SK-N-SH (cell line): ENCODE measurements at regions of chr1 and their contacts with region 1.

Region 1: DNA sequence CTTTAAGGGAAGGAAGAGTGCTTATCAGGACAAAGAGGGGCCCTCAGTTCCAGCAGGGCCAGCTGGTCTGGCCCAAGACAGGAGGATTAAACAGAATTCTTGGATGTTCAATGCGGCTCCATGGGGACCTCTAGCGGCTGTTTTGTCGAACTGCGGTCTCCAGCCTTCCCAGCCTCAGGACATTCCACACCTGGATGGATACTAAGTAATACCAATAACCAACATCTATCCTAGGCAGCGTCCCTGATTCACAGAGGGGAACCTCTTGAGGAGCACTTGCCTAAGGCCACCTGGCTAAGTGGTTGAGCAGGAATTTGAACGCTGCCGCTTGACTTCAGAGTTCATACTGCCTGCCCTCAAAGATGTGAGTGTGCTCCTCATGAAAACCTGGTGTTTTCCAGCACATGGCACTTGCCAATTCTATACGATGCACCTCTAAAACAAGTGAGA is 15.5 kb upstream of the CD247 start:
- DNase-seq: peak; percentile 81
- H3K4me3 ChIP-seq: no peak overlapping the region; a peak in 1 of 4 replicates
- H3K27ac ChIP-seq: no peak overlapping the region
- H3K4me1 ChIP-seq: peaks cover 0 to 3% of the 10 kb centered on the region in 2 experiments; a peak in 1 of 4 replicates
- H3K27me3 ChIP-seq: no peaks in the 10 kb centered on the region; the same call in 1 of the 2 replicates
- CTCF ChIP-seq: peak; percentile 91
- EP300 ChIP-seq: no peak
- RAD21 ChIP-seq: peak; percentile 91

Region 2: DNA sequence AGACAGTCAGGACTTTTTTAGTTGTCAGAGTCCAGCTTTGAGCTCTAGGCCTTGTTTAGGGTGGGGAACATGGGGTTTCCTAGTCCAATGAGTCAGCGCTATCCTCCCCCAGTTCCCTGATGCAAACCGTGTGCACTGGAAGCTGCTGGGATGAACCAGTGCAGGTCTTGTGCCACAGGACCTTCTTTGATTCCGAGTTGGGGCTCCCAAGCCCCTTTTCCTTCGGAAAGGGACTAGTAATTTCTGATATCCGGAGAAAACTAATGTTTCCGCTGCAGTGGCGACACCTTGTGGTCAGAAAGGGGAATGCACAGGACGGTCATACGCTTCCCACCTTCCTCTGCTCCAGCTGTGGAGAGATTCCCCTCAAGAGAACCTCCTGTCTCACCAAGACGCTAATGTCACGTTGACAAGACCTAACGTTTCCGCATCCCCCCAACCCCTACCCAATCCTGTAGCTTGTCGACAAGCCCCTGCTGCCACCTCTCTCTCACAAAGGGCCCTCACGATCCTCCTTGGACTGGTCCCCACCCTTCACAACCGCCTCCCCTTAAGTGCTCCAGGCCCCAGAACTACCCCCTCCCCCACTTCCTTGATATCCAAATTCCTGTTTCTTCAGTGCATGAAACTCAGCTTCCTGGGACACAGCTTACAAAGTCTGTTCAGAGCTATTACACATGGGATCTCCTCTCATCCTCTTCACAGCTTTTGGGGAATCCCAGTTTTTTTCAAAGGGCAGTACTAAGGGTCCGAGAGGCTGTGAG is 474.6 kb before region 1 on chr1:
- CTCF ChIA-PET with region 1: interaction called, 32 read pairs
- POLR2A ChIA-PET with region 1: no interaction called
- DNase-seq: peak; percentile 69
- H3K4me3 ChIP-seq: peak overlapping the region in 1 of 2 experiments; percentile 29; a peak in 2 of 4 replicates
- H3K27ac ChIP-seq: no peak overlapping the region
- H3K4me1 ChIP-seq: peaks cover 0 to 5% of the 10 kb centered on the region in 2 experiments; a peak in 1 of 4 replicates
- H3K27me3 ChIP-seq: no peaks in the 10 kb centered on the region
- CTCF ChIP-seq: peak; percentile 95
- EP300 ChIP-seq: no peak
- RAD21 ChIP-seq: peak; percentile 79

Region 3: GRCh38 chr1:167263819-167264464 is 269.9 kb before region 1 on chr1:
- CTCF ChIA-PET with region 1: interaction called, 63 read pairs
- POLR2A ChIA-PET with region 1: no interaction called
- DNase-seq: no peak
- H3K4me3 ChIP-seq: no peak overlapping the region
- H3K27ac ChIP-seq: no peak overlapping the region
- H3K4me1 ChIP-seq: peaks cover 0 to 3% of the 10 kb centered on the region in 2 experiments; a peak in 2 of 4 replicates
- H3K27me3 ChIP-seq: no peaks in the 10 kb centered on the region
- CTCF ChIP-seq: no peak
- EP300 ChIP-seq: no peak
- RAD21 ChIP-seq: no peak

Region 4: DNA sequence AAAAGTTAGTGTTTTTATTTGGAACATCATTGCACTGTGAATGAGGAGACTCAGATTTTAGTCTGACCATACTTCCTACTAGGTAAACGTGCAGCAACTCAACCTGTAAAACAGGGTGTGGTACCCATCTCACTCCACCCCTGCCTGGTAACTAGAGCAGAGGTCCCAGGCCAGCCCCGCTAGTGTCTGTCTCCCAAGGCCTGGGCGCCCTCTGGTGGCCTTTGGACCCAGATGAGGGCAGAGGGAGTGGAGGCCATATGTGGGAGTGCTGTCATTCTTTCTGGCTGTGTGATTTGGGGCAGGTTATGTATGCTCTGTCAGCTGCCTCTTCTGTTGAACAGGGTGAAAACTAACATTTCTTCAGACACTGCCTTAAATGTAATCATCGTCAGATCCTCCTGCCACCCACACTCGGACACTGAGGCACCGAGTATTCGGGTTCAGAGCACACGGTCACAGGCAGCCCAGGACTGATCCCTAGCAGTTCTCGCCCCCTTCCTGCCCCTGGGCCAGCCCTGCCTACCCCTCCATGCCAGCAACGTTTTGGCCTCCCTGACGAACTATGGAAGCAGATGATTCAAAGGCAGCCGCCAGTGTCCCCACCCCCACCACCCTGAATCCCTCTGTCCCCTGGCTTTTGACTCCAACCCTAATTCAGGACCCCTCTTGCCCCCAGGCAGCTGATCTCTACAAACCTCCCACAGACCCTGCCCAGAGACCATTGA is 91.6 kb before region 1 on chr1:
- CTCF ChIA-PET with region 1: interaction called, 53 read pairs
- POLR2A ChIA-PET with region 1: no interaction called
- DNase-seq: peak; percentile 91
- H3K4me3 ChIP-seq: peak overlapping the region in 1 of 2 experiments; percentile 42; a peak in 1 of 4 replicates
- H3K27ac ChIP-seq: no peak overlapping the region
- H3K4me1 ChIP-seq: peaks cover 0 to 7% of the 10 kb centered on the region in 2 experiments; a peak in 1 of 4 replicates
- H3K27me3 ChIP-seq: no peaks in the 10 kb centered on the region; the same call in 1 of the 2 replicates
- CTCF ChIP-seq: peak; percentile 89
- EP300 ChIP-seq: no peak
- RAD21 ChIP-seq: peak; percentile 94

Region 5: DNA sequence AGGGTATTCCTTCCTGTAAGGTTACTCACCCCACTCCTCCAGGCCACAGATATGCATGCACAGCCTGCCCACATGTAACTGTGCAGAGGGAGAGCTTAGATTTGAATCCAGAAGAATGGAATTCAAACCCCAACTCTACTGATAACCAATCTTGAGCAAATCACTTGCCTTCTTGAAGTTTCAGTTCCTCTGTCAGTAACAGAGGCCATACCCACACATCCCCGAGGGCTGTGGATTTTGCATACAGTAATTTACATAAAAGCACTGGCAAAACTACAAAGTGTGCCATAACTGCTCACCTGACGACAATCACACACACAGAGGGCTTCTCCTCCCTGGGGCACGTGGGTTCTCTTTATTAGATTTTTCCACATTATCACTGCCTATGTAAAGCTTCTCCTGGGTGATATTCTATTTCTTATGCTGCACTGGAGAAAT is 34.2 kb before region 1 on chr1:
- CTCF ChIA-PET with region 1: interaction called, 14 read pairs
- POLR2A ChIA-PET with region 1: no interaction called
- DNase-seq: no peak
- H3K4me3 ChIP-seq: no peak overlapping the region
- H3K27ac ChIP-seq: no peak overlapping the region
- H3K4me1 ChIP-seq: peaks cover 0 to 10% of the 10 kb centered on the region in 2 experiments; a peak in 2 of 4 replicates
- H3K27me3 ChIP-seq: peaks cover 18% of the 10 kb centered on the region
- CTCF ChIP-seq: no peak
- EP300 ChIP-seq: no peak
- RAD21 ChIP-seq: no peak